Activated CD4-positive, alpha-beta T cell treated with anti-CD3 and anti-CD28 coated beads, Interleukin-2, amount 10 ng/mL, durations not matched to agents 7 days and 5 days (primary cell): ENCODE measurements at regions of chr12 and their contacts with region 1.

Region 1: DNA sequence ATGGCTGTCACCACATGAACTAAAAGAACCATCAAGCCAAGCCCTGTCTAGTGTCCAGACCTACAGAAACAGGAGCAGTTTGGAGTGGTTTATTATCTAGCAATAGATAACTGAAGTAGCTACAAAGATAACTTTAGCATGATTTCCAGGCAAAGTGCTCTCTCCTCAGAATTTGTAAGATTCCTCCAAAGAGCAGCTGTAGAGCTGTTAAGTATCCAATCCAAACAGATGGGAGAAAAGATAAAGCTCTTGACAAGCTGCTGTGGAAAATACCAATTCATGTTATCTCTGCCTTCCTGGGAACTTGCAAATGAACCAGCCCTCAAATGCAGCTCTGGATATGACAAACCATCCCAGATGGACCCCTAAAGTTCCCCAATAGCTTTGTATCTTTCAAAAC is 78.9 kb upstream of the RESF1 start:
- DNase-seq: no peak
- H3K4me3 Mint-ChIP-seq: no peak overlapping the region
- H3K27ac Mint-ChIP-seq: no peak overlapping the region
- H3K4me1 Mint-ChIP-seq: peaks cover 12% of the 10 kb centered on the region
- H3K27me3 Mint-ChIP-seq: no peaks in the 10 kb centered on the region

Region 2: GRCh38 chr12:31890295-31891285 is 10.2 kb after region 1 on chr12:
- CTCF ChIA-PET with region 1: interaction called, 13 read pairs
- POLR2A ChIA-PET with region 1: no interaction called
- DNase-seq: no peak
- H3K4me3 Mint-ChIP-seq: no peak overlapping the region
- H3K27ac Mint-ChIP-seq: peak overlapping the region; percentile 84
- H3K4me1 Mint-ChIP-seq: peaks cover 50% of the 10 kb centered on the region
- H3K27me3 Mint-ChIP-seq: no peaks in the 10 kb centered on the region

Region 3: DNA sequence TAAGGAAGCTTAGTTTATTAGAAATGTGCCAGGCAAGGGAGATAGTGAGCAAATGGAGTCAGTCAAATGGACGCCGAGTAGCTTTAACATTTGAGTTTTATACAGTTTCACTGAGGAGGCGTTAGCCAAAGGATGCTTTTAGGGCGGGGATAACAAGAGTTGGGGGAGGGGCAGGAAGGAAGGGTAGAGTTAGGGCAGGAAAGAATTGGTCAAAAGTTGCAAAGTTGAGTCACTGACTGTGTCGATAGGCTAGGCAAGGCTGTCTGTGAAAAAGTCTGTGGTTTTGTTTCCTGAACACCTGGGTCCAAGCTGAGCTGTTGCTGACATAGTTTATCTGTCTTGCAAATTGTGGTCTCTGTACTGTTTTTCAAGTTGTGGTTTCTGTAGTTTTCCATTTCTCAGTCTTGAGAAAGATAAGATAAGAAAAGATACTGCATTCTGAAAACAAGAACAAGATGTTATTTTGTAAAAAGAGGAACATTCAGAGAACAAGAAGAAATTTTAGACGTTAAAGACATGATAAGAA is 16.2 kb after region 1 on chr12:
- CTCF ChIA-PET with region 1: interaction called, 11 read pairs
- POLR2A ChIA-PET with region 1: no interaction called
- DNase-seq: peak; percentile 94
- H3K4me3 Mint-ChIP-seq: peak overlapping the region; percentile 69
- H3K27ac Mint-ChIP-seq: peak overlapping the region; percentile 100
- H3K4me1 Mint-ChIP-seq: peaks cover 58% of the 10 kb centered on the region
- H3K27me3 Mint-ChIP-seq: no peaks in the 10 kb centered on the region